K562 (cell line): ENCODE measurements at regions of chr14 and their contacts with region 1.

Region 1: DNA sequence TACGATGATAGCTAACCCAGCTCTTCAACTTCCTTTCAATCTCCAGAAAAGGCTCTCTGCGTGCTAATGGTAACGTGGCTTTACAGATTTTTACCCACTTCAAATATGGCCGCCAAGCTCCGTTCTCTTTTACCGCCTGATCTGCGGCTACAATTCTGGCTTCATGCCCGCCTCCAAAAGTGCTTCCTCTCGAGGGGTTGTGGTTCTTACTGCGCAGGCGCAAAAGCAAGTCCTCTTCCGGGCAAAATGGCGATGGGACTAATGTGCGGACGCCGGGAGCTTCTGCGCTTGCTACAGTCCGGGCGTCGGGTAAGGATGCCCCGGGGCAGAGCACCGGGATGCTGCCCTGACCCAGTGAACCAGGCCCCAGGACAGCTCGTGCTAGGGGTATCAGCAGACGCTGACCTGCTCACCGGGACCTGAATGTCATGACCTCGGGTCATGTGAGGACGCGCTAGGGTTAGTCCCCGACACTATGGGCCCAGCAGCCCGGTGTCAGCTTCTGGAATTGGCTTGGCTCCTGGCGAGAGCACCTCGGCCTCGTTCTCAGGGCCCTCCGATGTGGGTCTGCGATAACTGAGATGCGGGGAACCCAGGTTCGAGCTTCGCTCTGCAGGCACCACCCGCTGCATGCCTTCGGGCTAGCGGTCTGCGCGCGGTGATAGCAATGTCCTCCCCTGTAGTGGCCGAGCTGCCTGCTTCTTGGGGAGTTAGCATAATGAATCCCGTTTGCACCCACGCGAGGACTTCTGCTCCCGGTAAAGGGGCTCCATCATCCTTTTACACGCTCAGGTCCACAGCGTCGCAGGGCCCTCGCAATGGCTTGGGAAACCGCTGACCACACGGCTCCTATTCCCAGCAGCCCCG is at the start of gene OXA1L:
- DNase-seq: peak; percentile 91 to 98 (median 94)
- ATAC-seq: peak; percentile 92
- H3K4me3 ChIP-seq: peak within 1 kb of the TSS; percentile 79
- H3K27ac ChIP-seq: peak within 1 kb of the TSS; percentile 97
- H3K4me1 ChIP-seq: peaks cover 7 to 10% of the 10 kb centered on the region in 2 experiments; a peak in 4 of 5 replicates
- H3K27me3 ChIP-seq: no peaks in the 10 kb centered on the region
- CTCF ChIP-seq: no peak
- EP300 ChIP-seq: no peak
- POLR2A ChIP-seq: peak; percentile 97
- RAD21 ChIP-seq: no peak
- polyA plus RNA-seq, gene OXA1L: 137 to 166 TPM

Region 2: DNA sequence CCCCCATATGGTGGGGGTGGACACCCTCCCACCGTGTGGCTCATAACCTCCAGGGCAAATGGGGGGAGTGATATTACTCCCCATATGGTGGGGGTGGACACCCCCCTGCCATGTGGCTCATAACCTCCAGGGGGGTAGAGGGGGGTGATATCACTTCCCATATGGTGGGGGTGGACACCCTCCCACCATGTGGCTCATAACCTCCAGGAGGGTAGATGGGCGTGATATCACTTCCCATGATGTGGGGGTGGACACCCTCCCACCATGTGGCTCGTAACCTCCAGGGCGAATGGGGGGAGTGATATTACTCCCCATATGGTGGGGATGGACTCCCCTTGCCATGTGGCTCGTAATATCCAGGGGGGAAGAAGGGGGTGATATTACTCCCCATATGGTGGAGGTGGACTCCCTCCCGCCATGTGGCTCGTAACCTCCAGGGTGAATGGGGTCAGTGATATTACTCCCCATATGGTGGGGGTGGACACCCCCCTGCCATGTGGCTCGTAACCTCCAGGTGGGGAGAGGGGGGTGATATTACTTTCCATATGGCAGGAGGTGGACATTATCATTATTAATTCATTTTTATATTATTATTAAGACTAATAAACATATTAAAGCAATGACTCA is 51.4 kb before region 1 on chr14:
- CTCF ChIA-PET with region 1: no interaction called
- POLR2A ChIA-PET with region 1: no interaction called
- in situ Hi-C with region 1: no loop called
- intact Hi-C with region 1: loop called (anchors 10 kb)
- DNase-seq: peak; percentile 59 to 83 (median 62)
- ATAC-seq: peak; percentile 67
- H3K4me3 ChIP-seq: no peak overlapping the region
- H3K27ac ChIP-seq: peak overlapping the region; percentile 90
- H3K4me1 ChIP-seq: peaks cover 8 to 10% of the 10 kb centered on the region in 2 experiments; a peak in 4 of 5 replicates
- H3K27me3 ChIP-seq: no peaks in the 10 kb centered on the region
- CTCF ChIP-seq: no peak
- EP300 ChIP-seq: peak; percentile 20; the same call in 1 of the 2 replicates
- POLR2A ChIP-seq: no peak
- RAD21 ChIP-seq: no peak

Region 3: GRCh38 chr14:22748631-22749068 is 18.0 kb before region 1 on chr14:
- CTCF ChIA-PET with region 1: no interaction called
- POLR2A ChIA-PET with region 1: interaction called, 22 read pairs
- in situ Hi-C with region 1: no loop called
- intact Hi-C with region 1: no loop called
- DNase-seq: no peak
- ATAC-seq: peak; percentile 65
- H3K4me3 ChIP-seq: no peak overlapping the region
- H3K27ac ChIP-seq: peak overlapping the region; percentile 31; the same call in 1 of the 3 replicates
- H3K4me1 ChIP-seq: peaks cover 0 to 16% of the 10 kb centered on the region in 2 experiments; a peak in 2 of 5 replicates
- H3K27me3 ChIP-seq: no peaks in the 10 kb centered on the region
- CTCF ChIP-seq: no peak
- EP300 ChIP-seq: no peak
- POLR2A ChIP-seq: no peak
- RAD21 ChIP-seq: no peak

Region 4: GRCh38 chr14:22781586-22781991 is 14.9 kb after region 1 on chr14:
- CTCF ChIA-PET with region 1: no interaction called
- POLR2A ChIA-PET with region 1: interaction called, 12 read pairs
- in situ Hi-C with region 1: no loop called
- intact Hi-C with region 1: no loop called
- DNase-seq: no peak
- ATAC-seq: no peak
- H3K4me3 ChIP-seq: no peak overlapping the region
- H3K27ac ChIP-seq: no peak overlapping the region
- H3K4me1 ChIP-seq: peaks cover 0 to 8% of the 10 kb centered on the region in 2 experiments; a peak in 3 of 5 replicates
- H3K27me3 ChIP-seq: no peaks in the 10 kb centered on the region
- CTCF ChIP-seq: no peak
- EP300 ChIP-seq: no peak
- POLR2A ChIP-seq: no peak
- RAD21 ChIP-seq: no peak

Region 5: DNA sequence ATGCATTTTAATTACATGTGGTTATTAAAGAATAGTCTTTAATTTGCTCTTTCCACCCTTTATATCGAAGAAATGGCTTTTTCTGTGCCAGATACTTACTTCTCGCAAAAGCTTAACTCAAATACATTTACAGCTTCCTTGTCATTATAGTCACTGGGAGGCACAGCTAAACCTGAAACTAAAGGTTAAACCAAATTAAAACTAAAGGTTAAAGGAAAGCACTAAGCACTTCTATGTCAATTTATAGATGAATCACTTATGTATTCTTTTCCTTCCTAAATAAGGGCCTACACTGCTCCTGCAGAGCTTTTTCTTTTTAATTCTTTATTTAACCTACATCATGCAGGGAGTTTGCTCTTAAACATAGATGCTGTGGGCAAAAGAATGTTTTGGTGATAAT is 234.2 kb after region 1 on chr14:
- CTCF ChIA-PET with region 1: no interaction called
- POLR2A ChIA-PET with region 1: no interaction called
- in situ Hi-C with region 1: no loop called
- intact Hi-C with region 1: no loop called
- DNase-seq: no peak
- ATAC-seq: no peak
- H3K4me3 ChIP-seq: no peak overlapping the region
- H3K27ac ChIP-seq: no peak overlapping the region
- H3K4me1 ChIP-seq: peaks cover 23 to 27% of the 10 kb centered on the region in 2 experiments
- H3K27me3 ChIP-seq: no peaks in the 10 kb centered on the region
- CTCF ChIP-seq: no peak
- EP300 ChIP-seq: no peak
- POLR2A ChIP-seq: no peak
- RAD21 ChIP-seq: no peak

Region 6: DNA sequence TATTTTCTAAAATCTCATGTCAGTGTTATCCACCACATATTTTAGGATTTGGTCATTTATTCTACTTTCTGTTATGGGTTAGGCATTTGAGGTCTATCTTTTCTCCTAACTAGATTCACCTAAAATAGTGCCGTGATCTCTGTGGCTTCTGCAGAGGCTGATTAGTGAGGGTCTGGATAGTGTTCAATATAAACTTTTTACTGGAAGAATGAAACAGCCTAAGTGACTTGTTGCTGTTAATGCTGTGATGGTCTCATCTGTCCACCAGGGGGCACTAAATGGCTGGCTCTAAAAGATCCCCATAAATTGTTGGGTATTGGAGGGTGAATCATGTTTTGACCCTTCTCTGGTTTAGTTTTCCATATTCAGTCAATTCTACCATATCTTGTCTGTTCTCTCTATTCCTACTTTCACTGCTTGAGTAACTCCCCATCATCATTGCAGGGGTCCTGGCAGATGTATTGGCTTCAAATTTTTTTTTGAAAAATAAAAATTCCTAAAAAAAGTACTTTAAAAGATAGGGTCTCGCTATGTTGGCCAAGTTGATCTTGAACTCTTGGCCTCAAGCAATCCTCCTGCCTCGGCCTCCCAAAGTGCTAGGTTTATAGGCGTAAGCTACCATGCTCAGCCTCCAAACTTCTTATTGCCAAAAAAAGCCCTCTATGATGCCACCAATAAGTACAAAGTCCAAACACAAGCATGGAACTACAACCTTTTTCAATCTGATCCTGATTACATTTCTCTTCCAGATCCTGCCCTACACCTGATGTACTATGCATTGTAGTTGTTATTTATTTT is 561.5 kb after region 1 on chr14:
- CTCF ChIA-PET with region 1: no interaction called
- POLR2A ChIA-PET with region 1: interaction called, 3 read pairs
- in situ Hi-C with region 1: no loop called
- intact Hi-C with region 1: loop called (anchors 5 kb)
- DNase-seq: peak; percentile 66 to 83 (median 74)
- ATAC-seq: peak; percentile 83
- H3K4me3 ChIP-seq: no peak overlapping the region
- H3K27ac ChIP-seq: no peak overlapping the region
- H3K4me1 ChIP-seq: peaks cover 2 to 3% of the 10 kb centered on the region in 2 experiments; a peak in 4 of 5 replicates
- H3K27me3 ChIP-seq: no peaks in the 10 kb centered on the region
- CTCF ChIP-seq: peak; percentile 81 to 94 (median 82)
- EP300 ChIP-seq: no peak
- POLR2A ChIP-seq: no peak
- RAD21 ChIP-seq: peak; percentile 91 to 95